SK-N-SH (cell line): ENCODE measurements at regions of chr10 and their contacts with region 1.

Region 1: DNA sequence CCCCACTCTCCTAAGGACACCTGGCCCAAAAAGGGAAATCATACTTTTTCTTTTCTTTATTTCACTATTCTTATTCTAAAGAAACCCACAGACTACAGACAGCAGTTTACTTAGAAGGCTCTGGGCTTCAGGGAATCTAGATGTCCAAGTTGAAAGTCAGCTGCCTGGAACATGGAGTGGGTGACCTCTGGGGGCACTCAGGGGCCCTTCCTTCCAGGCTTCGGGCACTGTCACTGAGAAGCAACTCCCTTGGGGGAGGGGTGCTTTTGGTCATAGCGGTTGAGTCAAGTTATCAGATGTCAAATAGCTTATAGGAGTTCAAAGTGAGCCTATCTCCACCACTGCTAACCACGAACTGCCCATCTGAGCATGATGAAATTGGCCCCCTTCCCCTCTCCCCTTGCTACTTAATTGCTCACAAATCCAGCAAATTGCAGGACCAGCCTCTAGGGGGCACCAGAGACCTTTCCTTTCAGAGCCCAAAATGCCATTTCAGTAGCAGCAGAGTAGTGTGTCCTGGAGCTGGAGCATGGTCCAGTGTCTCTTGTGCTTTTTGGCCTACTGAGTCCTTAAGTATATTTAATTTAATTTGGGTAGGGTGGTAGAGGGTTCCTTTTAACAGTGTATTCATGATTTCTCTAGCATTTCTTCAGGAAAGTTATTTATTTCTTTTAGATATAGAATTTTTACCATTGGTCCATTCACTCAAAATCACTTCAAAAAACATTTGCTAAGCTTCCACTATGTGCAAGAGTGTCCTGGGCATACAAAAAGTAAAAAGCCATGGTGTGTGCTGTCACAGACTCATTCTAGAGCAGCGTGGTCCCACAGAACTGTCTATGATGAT is 463.8 kb downstream of the KCNMA1 start:
- DNase-seq: peak; percentile 66
- H3K4me3 ChIP-seq: no peak overlapping the region; a peak in 1 of 4 replicates
- H3K27ac ChIP-seq: no peak overlapping the region
- H3K4me1 ChIP-seq: peaks cover 0 to 2% of the 10 kb centered on the region in 2 experiments; a peak in 3 of 4 replicates
- H3K27me3 ChIP-seq: no peaks in the 10 kb centered on the region
- CTCF ChIP-seq: peak; percentile 95
- EP300 ChIP-seq: no peak
- RAD21 ChIP-seq: peak; percentile 97

Region 2: DNA sequence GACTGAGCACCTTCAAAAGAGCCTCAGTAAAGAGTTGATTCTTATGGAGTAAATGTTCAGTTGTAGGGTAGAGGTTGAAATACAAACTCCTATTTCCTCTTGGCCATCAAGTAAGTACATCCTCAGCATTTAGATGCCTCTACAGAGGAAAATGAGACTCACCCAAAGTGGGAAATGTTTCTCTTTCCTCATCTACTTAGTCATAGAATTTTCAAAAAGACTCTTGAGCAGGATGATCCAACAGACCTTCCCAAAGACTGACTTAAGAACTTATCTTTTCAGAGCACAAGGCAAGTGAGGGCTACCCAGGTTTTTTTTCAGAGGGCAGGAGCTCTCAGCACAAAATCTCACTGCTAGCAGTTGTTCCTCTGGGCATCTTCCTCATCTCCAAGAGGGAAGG is 14.7 kb after region 1 on chr10:
- CTCF ChIA-PET with region 1: interaction called, 38 read pairs
- POLR2A ChIA-PET with region 1: no interaction called
- DNase-seq: no peak
- H3K4me3 ChIP-seq: no peak overlapping the region
- H3K27ac ChIP-seq: peak overlapping the region in 1 of 2 experiments; percentile 60; a peak in 3 of 4 replicates
- H3K4me1 ChIP-seq: peaks cover 12 to 23% of the 10 kb centered on the region in 2 experiments; a peak in 3 of 4 replicates
- H3K27me3 ChIP-seq: no peaks in the 10 kb centered on the region
- CTCF ChIP-seq: no peak
- EP300 ChIP-seq: no peak
- RAD21 ChIP-seq: no peak

Region 3: GRCh38 chr10:77240041-77240652 is 66.3 kb after region 1 on chr10:
- CTCF ChIA-PET with region 1: interaction called, 19 read pairs
- POLR2A ChIA-PET with region 1: no interaction called
- DNase-seq: no peak
- H3K4me3 ChIP-seq: no peak overlapping the region
- H3K27ac ChIP-seq: peak overlapping the region in 1 of 2 experiments; percentile 60; a peak in 2 of 4 replicates
- H3K4me1 ChIP-seq: peaks cover 19 to 20% of the 10 kb centered on the region in 2 experiments; a peak in 3 of 4 replicates
- H3K27me3 ChIP-seq: no peaks in the 10 kb centered on the region
- CTCF ChIP-seq: no peak
- EP300 ChIP-seq: no peak
- RAD21 ChIP-seq: no peak

Region 4: DNA sequence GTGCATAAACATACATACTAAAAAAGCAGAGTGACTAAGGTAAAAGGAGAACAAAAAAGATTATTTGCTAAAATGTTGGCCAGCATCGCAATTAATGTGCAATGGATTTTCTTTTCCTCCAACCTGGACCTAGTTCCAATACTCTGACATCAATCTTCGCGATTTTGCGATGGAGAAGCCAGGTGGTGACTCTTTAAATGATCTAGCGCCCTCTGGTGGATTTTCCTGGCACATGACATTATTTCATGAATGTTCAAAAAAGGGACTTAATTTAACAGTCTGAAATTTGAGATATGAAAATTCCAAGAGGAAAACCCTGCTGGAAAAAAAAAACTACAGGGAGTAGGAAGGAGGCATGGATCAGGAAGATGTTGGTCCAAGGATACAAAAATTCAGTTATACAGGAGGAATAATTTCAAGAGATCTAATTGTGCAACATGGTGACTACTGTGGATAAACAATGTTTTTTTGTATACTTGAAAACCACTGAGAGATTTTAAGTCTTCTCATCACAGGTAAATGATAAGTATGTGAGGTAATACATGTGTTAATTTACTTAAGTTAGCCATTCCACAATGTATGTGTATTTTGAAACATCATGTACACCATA is 468.1 kb after region 1 on chr10:
- CTCF ChIA-PET with region 1: interaction called, 513 read pairs
- POLR2A ChIA-PET with region 1: no interaction called
- DNase-seq: peak; percentile 72
- H3K4me3 ChIP-seq: no peak overlapping the region; a peak in 1 of 4 replicates
- H3K27ac ChIP-seq: no peak overlapping the region
- H3K4me1 ChIP-seq: peaks cover 0 to 10% of the 10 kb centered on the region in 2 experiments; a peak in 2 of 4 replicates
- H3K27me3 ChIP-seq: no peaks in the 10 kb centered on the region
- CTCF ChIP-seq: peak; percentile 90
- EP300 ChIP-seq: no peak
- RAD21 ChIP-seq: peak; percentile 99

Region 5: GRCh38 chr10:77756319-77757232 is 582.7 kb after region 1 on chr10:
- CTCF ChIA-PET with region 1: interaction called, 12 read pairs
- POLR2A ChIA-PET with region 1: no interaction called
- DNase-seq: peak; percentile 65
- H3K4me3 ChIP-seq: no peak overlapping the region; a peak in 1 of 4 replicates
- H3K27ac ChIP-seq: no peak overlapping the region
- H3K4me1 ChIP-seq: peaks cover 0 to 3% of the 10 kb centered on the region in 2 experiments; a peak in 1 of 4 replicates
- H3K27me3 ChIP-seq: no peaks in the 10 kb centered on the region
- CTCF ChIP-seq: peak; percentile 89
- EP300 ChIP-seq: no peak
- RAD21 ChIP-seq: peak; percentile 89